GM12878 (cell line): ENCODE measurements at regions of chr17 and their contacts with region 1.

Region 1: GRCh38 chr17:1573916-1574696 is 11.5 kb upstream of the PITPNA start:
- DNase-seq: no peak
- ATAC-seq: peak; percentile 82
- H3K4me3 ChIP-seq: no peak overlapping the region
- H3K27ac ChIP-seq: no peak overlapping the region
- H3K4me1 ChIP-seq: peaks cover 10% of the 10 kb centered on the region
- H3K27me3 ChIP-seq: no peaks in the 10 kb centered on the region
- CTCF ChIP-seq: peak; percentile 85 to 95 (median 90)
- EP300 ChIP-seq: no peak
- POLR2A ChIP-seq: no peak
- RAD21 ChIP-seq: peak; percentile 92

Region 2: DNA sequence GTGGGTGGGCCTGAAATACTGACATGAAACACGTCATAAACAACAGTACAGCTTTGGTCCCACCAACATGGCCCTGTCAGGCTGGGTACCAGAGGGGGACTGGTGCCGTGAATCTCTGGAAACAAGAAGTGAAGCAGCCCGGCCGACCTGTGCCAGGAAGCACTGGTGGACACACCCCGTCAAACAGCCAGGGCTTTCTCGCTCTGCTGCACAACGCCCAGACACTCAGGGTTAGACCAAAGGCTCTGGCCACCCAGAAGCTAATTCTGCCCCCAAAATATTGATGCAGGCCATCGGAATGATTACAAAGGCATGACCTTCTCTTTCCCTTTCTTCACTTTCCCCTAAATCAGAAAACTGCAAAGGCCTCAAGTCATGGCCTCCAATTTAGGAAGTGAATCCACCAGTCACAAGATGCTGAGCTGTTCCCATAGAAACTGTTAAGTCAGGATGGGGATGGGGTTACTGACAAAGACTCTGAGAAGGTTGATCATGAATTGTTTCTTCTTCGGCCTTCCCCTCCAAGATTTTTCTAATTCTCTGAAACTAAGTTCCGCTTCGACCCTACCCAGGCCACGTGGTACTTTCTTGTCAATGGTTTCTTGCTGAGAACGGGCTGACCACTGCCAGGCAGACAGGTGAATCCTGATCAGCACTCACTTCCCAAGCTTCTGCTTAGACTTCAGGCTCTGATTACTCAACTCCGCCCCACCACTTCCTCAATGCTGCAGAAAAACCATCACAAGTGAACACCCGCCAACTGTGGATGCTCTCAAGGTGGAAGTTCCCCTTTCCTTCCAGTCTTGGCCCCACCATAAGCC is 18.2 kb before region 1 on chr17:
- CTCF ChIA-PET with region 1: interaction called, 14 read pairs
- POLR2A ChIA-PET with region 1: no interaction called
- RAD21 ChIA-PET with region 1: interaction called, 4 read pairs
- SMC1A ChIA-PET with region 1: interaction called, 3 read pairs
- in situ Hi-C with region 1: no loop called
- intact Hi-C with region 1: no loop called
- DNase-seq: peak; percentile 43
- ATAC-seq: peak; percentile 81
- H3K4me3 ChIP-seq: no peak overlapping the region
- H3K27ac ChIP-seq: peak overlapping the region; percentile 69
- H3K4me1 ChIP-seq: peaks cover 40% of the 10 kb centered on the region
- H3K27me3 ChIP-seq: no peaks in the 10 kb centered on the region
- CTCF ChIP-seq: no peak
- EP300 ChIP-seq: peak in 1 of 2 experiments; percentile 20; a peak in 1 of 4 replicates
- POLR2A ChIP-seq: no peak
- RAD21 ChIP-seq: no peak

Region 3: GRCh38 chr17:1590031-1590748 is 16.1 kb after region 1 on chr17:
- CTCF ChIA-PET with region 1: interaction called, 6 read pairs
- POLR2A ChIA-PET with region 1: no interaction called
- RAD21 ChIA-PET with region 1: interaction called, 12 read pairs
- SMC1A ChIA-PET with region 1: interaction called, 3 read pairs
- in situ Hi-C with region 1: no loop called
- intact Hi-C with region 1: loop called (anchors 2 kb)
- DNase-seq: no peak
- ATAC-seq: no peak
- H3K4me3 ChIP-seq: no peak overlapping the region
- H3K27ac ChIP-seq: no peak overlapping the region; the same call in 1 of the 2 replicates
- H3K4me1 ChIP-seq: peaks cover 13% of the 10 kb centered on the region
- H3K27me3 ChIP-seq: no peaks in the 10 kb centered on the region
- CTCF ChIP-seq: no peak
- EP300 ChIP-seq: no peak
- POLR2A ChIP-seq: no peak
- RAD21 ChIP-seq: no peak

Region 4: GRCh38 chr17:1606352-1607033 is 32.4 kb after region 1 on chr17:
- CTCF ChIA-PET with region 1: interaction called, 25 read pairs
- POLR2A ChIA-PET with region 1: interaction called, 7 read pairs
- RAD21 ChIA-PET with region 1: interaction called, 24 read pairs
- SMC1A ChIA-PET with region 1: interaction called, 31 read pairs
- in situ Hi-C with region 1: no loop called
- intact Hi-C with region 1: no loop called
- DNase-seq: no peak
- ATAC-seq: peak; percentile 55
- H3K4me3 ChIP-seq: no peak overlapping the region
- H3K27ac ChIP-seq: peak overlapping the region; percentile 85
- H3K4me1 ChIP-seq: peaks cover 32% of the 10 kb centered on the region
- H3K27me3 ChIP-seq: no peaks in the 10 kb centered on the region
- CTCF ChIP-seq: no peak
- EP300 ChIP-seq: peak in 1 of 2 experiments; percentile 17; a peak in 1 of 4 replicates
- POLR2A ChIP-seq: peak; percentile 56; the same call in 1 of the 2 replicates
- RAD21 ChIP-seq: no peak

Region 5: DNA sequence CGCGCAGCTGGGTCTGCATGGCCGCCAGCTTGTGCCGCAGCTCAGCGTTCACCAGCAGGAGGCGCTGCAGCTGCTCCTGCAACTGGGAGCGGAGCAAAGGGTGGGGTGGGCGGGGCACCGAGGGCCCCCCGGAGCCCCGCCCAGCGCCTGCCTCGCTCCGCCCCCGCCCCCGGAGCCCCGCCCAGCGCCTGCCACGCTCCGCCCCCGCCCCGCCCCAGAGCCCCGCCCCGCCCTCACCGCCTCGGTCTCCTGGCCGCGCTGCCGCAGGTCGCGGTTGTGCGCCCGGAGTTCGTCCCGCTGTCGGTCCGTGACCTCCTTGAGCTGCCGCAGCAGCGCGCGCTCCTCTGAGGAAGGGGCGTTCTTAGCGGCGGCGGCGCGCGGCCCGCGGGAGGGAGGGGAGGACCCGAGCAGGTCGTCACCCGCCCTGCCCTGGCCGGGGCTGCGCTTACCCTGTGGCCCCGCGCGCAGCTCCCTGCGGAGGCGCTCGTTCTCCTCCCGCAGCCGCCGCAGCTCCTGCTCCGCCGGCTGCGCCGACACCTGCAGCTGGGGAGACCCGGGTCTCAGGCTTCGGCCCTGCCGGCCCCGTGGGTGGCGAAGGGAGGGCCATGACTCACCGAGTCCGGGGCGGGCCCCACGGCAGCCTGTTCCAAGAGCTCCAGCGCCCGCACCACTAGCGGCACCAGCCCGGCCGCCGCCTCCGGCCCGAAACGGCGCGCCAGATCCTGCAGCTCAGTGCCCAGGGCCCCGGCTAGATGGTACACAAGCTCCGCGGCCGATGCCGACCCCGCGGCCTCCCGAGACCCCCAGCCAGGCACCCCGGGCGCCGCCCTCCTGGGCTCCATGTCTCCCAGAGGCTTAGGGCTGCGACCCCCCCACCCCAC is 75.1 kb after region 1 on chr17:
- CTCF ChIA-PET with region 1: interaction called, 15 read pairs
- POLR2A ChIA-PET with region 1: interaction called, 4 read pairs
- RAD21 ChIA-PET with region 1: interaction called, 28 read pairs
- SMC1A ChIA-PET with region 1: interaction called, 15 read pairs
- in situ Hi-C with region 1: no loop called
- intact Hi-C with region 1: no loop called
- DNase-seq: peak; percentile 58
- ATAC-seq: peak; percentile 70
- H3K4me3 ChIP-seq: peak overlapping the region; percentile 64; the same call in 1 of the 2 replicates
- H3K27ac ChIP-seq: peak overlapping the region; percentile 18
- H3K4me1 ChIP-seq: peaks cover 31% of the 10 kb centered on the region
- H3K27me3 ChIP-seq: no peaks in the 10 kb centered on the region
- CTCF ChIP-seq: peak; percentile 78 to 99 (median 97)
- EP300 ChIP-seq: no peak
- POLR2A ChIP-seq: peak; percentile 73
- RAD21 ChIP-seq: peak; percentile 57

Region 6: DNA sequence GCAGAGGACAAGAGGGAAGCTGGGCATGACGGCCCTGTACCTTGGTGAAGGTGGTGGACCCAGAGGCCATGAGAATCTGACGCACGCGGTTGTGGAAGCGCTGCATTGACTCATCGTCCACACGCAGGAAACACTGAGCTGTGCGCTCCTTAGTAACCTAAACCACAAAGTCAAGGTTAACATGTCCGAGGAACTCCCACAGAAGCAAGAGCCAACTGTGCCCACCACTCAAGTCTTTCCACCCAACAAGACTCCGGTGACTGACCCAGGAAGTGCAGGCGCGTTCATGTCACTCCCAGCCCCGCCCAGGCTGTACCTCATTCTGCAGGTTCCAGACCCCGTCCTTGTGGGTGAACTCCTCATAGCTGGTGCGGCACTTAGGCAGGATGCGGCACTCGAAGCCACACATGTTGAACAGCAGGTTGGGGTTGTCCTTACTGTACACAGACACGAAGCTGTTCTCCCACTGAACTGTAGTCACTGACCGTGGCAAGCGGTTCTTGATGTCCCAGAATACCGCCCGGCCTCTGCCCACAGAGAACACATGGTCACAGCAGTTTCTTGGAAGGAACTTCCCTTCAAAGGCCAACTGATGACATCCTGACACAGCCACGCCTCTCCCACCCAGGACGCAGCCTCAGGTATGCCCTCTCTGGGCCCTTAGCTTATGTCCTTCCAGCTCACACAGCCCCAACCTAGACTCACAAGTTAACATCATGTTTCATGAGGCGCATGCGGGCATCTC is 99.1 kb after region 1 on chr17:
- CTCF ChIA-PET with region 1: interaction called, 10 read pairs
- POLR2A ChIA-PET with region 1: no interaction called
- RAD21 ChIA-PET with region 1: interaction called, 3 read pairs
- SMC1A ChIA-PET with region 1: interaction called, 3 read pairs
- in situ Hi-C with region 1: no loop called
- intact Hi-C with region 1: no loop called
- DNase-seq: no peak
- ATAC-seq: no peak
- H3K4me3 ChIP-seq: no peak overlapping the region
- H3K27ac ChIP-seq: no peak overlapping the region
- H3K4me1 ChIP-seq: no peaks in the 10 kb centered on the region
- H3K27me3 ChIP-seq: no peaks in the 10 kb centered on the region
- CTCF ChIP-seq: no peak
- EP300 ChIP-seq: no peak
- POLR2A ChIP-seq: peak; percentile 66
- RAD21 ChIP-seq: no peak